AG04449 (cell line): ENCODE measurements at regions of chr9 and their contacts with region 1.

Region 1: GRCh38 chr9:121059998-121060636 is 10.0 kb upstream of the C5 start:
- DNase-seq: no peak
- H3K4me3 ChIP-seq: no peak overlapping the region
- CTCF ChIP-seq: peak; percentile 59

Region 2: DNA sequence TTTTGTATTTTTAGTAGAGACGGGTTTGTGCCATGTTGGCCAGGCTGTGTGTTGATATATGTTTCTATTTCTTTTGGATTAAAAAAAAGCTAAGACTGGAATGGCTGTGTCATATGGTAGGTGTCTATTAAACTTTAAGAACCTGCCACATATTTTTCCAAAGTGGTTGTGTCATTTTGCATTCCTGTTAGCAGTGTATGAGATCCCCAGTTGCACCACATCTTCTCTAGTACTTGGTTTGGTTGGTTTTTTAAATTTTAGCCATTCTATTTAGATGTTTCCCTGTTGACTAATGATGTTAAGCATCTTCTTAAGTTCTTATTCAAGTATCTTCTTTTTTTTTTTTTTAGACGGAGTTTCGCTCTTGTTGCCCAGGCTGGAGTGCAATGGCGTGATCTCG is 309.7 kb before region 1 on chr9:
- CTCF ChIA-PET with region 1: interaction called, 137 read pairs
- POLR2A ChIA-PET with region 1: no interaction called
- DNase-seq: peak; percentile 26
- H3K4me3 ChIP-seq: no peak overlapping the region
- CTCF ChIP-seq: no peak

Region 3: GRCh38 chr9:120830151-120830550 is 230.0 kb before region 1 on chr9:
- CTCF ChIA-PET with region 1: no interaction called
- POLR2A ChIA-PET with region 1: no interaction called
- DNase-seq: no peak
- H3K4me3 ChIP-seq: no peak overlapping the region
- CTCF ChIP-seq: no peak

Region 4: DNA sequence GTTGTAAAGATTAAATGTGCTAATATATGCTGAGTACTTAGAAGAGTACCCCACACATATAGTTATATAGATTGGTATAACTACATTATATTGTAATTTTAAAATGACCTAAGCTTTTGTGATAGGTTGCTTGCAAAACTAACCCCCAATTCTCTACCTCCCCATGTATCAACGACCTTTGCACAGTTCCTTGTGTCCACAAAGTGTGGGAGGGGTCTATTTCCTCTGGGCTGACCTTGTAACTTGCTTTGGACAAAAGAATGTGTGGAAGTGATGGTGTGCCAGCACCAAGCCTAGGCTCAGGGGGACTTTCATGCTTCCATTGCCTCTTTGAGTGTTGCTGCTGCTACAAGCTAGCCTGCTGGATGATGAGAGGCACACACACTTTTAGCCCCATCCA is 30.6 kb before region 1 on chr9:
- CTCF ChIA-PET with region 1: interaction called, 21 read pairs
- POLR2A ChIA-PET with region 1: no interaction called
- DNase-seq: no peak
- H3K4me3 ChIP-seq: no peak overlapping the region
- CTCF ChIP-seq: no peak

Region 5: GRCh38 chr9:121048618-121049017 is 11.5 kb before region 1 on chr9:
- CTCF ChIA-PET with region 1: interaction called, 103 read pairs
- POLR2A ChIA-PET with region 1: no interaction called
- DNase-seq: peak; percentile 21
- H3K4me3 ChIP-seq: no peak overlapping the region
- CTCF ChIP-seq: no peak

Region 6: GRCh38 chr9:121082075-121082474 is 22.0 kb after region 1 on chr9:
- CTCF ChIA-PET with region 1: interaction called, 10 read pairs
- POLR2A ChIA-PET with region 1: no interaction called
- DNase-seq: no peak
- H3K4me3 ChIP-seq: no peak overlapping the region
- CTCF ChIP-seq: no peak